Activated CD4-positive, alpha-beta memory T cell treated with anti-CD3 and anti-CD28 coated beads for 36 hours (primary cell): ENCODE measurements at regions of chr17 and their contacts with region 1.

Region 1: GRCh38 chr17:64200080-64201032 is 62.7 kb downstream of the TEX2 start:
- DNase-seq: peak; percentile 52
- H3K4me3 Mint-ChIP-seq: no peak overlapping the region
- H3K27ac Mint-ChIP-seq: no peak overlapping the region
- H3K4me1 Mint-ChIP-seq: peaks cover 39% of the 10 kb centered on the region
- H3K27me3 Mint-ChIP-seq: no peaks in the 10 kb centered on the region

Region 2: GRCh38 chr17:64216338-64217248 is 16.2 kb after region 1 on chr17:
- CTCF ChIA-PET with region 1: interaction called, 5 read pairs
- POLR2A ChIA-PET with region 1: interaction called, 4 read pairs
- intact Hi-C with region 1: loop called (anchors 2 kb)
- DNase-seq: no peak
- H3K4me3 Mint-ChIP-seq: no peak overlapping the region
- H3K27ac Mint-ChIP-seq: no peak overlapping the region
- H3K4me1 Mint-ChIP-seq: peaks cover 20% of the 10 kb centered on the region
- H3K27me3 Mint-ChIP-seq: no peaks in the 10 kb centered on the region